Endothelial cell of umbilical vein (primary cell): ENCODE measurements at regions of chr20 and their contacts with region 1.

Region 1: GRCh38 chr20:32484958-32485769 is 100.0 kb downstream of the NOL4L start:
- DNase-seq: peak; percentile 91
- H3K4me3 ChIP-seq: peak overlapping the region; percentile 37 to 66 (median 60)
- H3K27ac ChIP-seq: peak overlapping the region; percentile 96
- H3K4me1 ChIP-seq: peaks cover 33% of the 10 kb centered on the region
- H3K27me3 ChIP-seq: no peaks in the 10 kb centered on the region
- CTCF ChIP-seq: peak; percentile 71 to 74
- POLR2A ChIP-seq: no peak

Region 2: DNA sequence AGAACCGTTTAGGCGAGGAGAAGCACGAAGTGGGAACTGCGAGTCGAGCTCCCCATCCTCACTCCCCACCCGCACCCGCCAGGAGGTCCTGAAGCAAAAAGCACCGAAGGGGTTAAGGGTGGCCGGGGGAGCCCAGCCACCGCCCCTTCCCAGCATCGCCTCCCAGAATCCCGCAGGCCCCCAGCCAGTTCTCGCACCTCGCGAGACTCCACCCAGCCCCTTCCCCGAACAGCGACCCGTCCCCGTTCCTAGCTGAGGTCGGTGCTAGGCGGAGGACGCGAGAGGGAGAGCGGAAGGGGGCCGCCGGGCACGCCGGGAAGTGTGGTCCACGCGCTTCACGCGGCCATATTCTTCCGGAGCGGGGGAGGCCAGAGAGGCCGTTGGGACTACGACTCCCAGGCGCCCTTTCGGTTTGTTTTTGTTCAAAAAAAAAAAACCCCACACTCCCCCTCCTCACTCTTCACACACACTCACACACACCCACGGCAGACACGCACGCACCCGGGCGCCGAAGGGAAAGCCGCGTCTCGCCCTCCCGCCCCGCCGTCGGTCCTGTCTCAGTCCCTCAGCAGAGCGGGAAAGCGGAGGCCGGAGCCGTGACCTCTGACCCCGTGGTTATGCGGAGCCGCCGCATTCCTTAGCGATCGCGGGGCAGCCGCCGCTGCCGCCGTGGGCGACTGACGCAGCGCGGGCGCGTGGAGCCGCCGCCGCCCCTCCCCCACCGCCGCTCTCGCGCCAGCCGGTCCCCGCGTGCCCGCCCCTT is 127.1 kb before region 1 on chr20 and contains the start of gene ASXL1:
- CTCF ChIA-PET with region 1: interaction called, 3 read pairs
- POLR2A ChIA-PET with region 1: no interaction called
- dilution Hi-C with region 1: no loop called
- intact Hi-C with region 1: loop called (anchors 1 kb)
- DNase-seq: peak; percentile 97
- H3K4me3 ChIP-seq: peak within 1 kb of the TSS; percentile 78 to 92 (median 92)
- H3K27ac ChIP-seq: peak within 1 kb of the TSS; percentile 94
- H3K4me1 ChIP-seq: peaks cover 30% of the 10 kb centered on the region
- H3K27me3 ChIP-seq: no peaks in the 10 kb centered on the region
- CTCF ChIP-seq: no peak
- POLR2A ChIP-seq: peak; percentile 61
- total RNA-seq, gene ASXL1: 98.9 and 101 TPM in 2 replicates

Region 3: GRCh38 chr20:32456869-32457478 is 28.2 kb before region 1 on chr20:
- CTCF ChIA-PET with region 1: interaction called, 22 read pairs
- POLR2A ChIA-PET with region 1: no interaction called
- dilution Hi-C with region 1: no loop called
- intact Hi-C with region 1: no loop called
- DNase-seq: no peak
- H3K4me3 ChIP-seq: no peak overlapping the region
- H3K27ac ChIP-seq: no peak overlapping the region
- H3K4me1 ChIP-seq: peaks cover 20% of the 10 kb centered on the region
- H3K27me3 ChIP-seq: no peaks in the 10 kb centered on the region
- CTCF ChIP-seq: peak; percentile 67 to 75
- POLR2A ChIP-seq: no peak

Region 4: DNA sequence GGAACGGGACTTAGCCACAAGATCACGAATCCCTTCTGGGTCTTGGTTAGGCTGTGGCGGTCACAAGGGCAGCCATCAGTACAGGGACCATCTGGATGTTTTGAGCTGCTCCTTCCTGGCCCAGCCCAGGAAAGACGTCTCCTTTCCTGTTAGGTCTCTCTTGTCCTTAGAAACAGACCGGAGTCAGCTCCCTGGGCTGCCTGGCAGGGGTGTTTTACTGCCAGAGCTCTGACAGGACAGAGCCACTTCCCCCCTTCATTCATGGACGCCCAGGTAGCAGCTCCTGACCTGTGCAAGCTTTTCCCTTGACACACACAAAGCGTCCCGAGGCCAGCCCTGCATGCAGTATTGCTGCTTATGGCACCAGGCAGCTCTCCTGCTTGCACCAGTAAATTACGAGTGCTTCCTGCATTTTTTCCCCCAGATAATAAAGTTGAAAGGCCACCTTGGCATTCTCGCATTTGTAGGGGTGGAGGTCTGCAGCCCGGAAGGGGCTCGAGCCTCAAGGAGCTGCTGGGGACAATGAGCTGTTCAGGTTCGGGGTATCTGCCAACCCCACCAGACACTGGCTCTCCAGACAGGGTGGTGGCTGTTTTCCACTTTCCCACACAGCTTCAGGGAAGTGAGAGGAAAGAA is 12.5 kb after region 1 on chr20:
- CTCF ChIA-PET with region 1: interaction called, 30 read pairs
- POLR2A ChIA-PET with region 1: interaction called, 7 read pairs
- dilution Hi-C with region 1: no loop called
- intact Hi-C with region 1: loop called (anchors 1 kb)
- DNase-seq: peak; percentile 63
- H3K4me3 ChIP-seq: no peak overlapping the region
- H3K27ac ChIP-seq: peak overlapping the region; percentile 79
- H3K4me1 ChIP-seq: peaks cover 32% of the 10 kb centered on the region
- H3K27me3 ChIP-seq: no peaks in the 10 kb centered on the region
- CTCF ChIP-seq: no peak
- POLR2A ChIP-seq: peak; percentile 23

Region 5: GRCh38 chr20:32509639-32510066 is 24.5 kb after region 1 on chr20:
- CTCF ChIA-PET with region 1: interaction called, 25 read pairs
- POLR2A ChIA-PET with region 1: no interaction called
- dilution Hi-C with region 1: no loop called
- intact Hi-C with region 1: no loop called
- DNase-seq: peak; percentile 71
- H3K4me3 ChIP-seq: no peak overlapping the region
- H3K27ac ChIP-seq: peak overlapping the region; percentile 9
- H3K4me1 ChIP-seq: peaks cover 24% of the 10 kb centered on the region
- H3K27me3 ChIP-seq: no peaks in the 10 kb centered on the region
- CTCF ChIP-seq: peak; percentile 53 to 63
- POLR2A ChIP-seq: no peak

Region 6: GRCh38 chr20:32516583-32517517 is 31.7 kb after region 1 on chr20:
- CTCF ChIA-PET with region 1: interaction called, 14 read pairs
- POLR2A ChIA-PET with region 1: no interaction called
- dilution Hi-C with region 1: no loop called
- intact Hi-C with region 1: loop called (anchors 1 kb)
- DNase-seq: peak; percentile 63
- H3K4me3 ChIP-seq: no peak overlapping the region
- H3K27ac ChIP-seq: peak overlapping the region; percentile 1
- H3K4me1 ChIP-seq: peaks cover 24% of the 10 kb centered on the region
- H3K27me3 ChIP-seq: no peaks in the 10 kb centered on the region
- CTCF ChIP-seq: no peak
- POLR2A ChIP-seq: no peak

Region 7: DNA sequence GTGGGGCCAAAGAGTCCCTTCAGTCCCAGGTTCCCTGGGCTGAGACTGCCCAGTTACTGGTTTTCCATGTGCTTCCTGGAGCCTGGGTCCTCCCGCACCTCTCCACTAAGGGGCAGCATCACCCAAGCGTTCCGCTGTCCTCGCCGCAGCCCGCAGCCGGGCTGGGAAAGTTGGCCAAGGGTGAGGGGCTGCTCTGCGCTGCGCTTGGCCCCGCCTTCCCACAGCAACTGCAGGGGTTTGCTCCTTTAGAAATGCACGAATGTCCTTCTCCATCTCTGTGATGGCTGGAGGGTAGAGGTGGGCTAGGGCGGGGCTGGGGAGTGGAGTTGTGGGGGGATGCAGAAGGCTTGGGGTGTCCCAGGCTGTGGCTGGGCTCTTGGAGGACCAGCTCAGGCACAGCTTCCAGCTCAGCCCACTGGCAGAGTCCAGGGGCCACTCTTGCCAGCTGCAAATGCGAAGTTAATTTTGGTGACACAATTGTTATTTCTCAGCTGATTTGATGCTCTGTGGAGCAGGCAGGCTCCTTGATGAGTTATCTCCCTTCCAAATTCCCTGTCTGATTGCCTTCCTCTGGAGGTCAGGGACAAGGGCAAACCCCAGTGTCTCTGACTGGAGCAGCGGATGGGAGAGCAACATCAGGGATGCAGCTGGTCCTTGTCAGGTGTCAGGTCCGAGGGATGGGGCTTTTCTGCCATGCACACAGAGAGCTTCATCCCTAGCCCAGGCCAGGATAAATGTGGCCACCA is 36.8 kb after region 1 on chr20:
- CTCF ChIA-PET with region 1: interaction called, 14 read pairs
- POLR2A ChIA-PET with region 1: interaction called, 3 read pairs
- dilution Hi-C with region 1: no loop called
- intact Hi-C with region 1: loop called (anchors 1 kb)
- DNase-seq: peak; percentile 53
- H3K4me3 ChIP-seq: no peak overlapping the region
- H3K27ac ChIP-seq: no peak overlapping the region
- H3K4me1 ChIP-seq: peaks cover 16% of the 10 kb centered on the region
- H3K27me3 ChIP-seq: no peaks in the 10 kb centered on the region
- CTCF ChIP-seq: peak; percentile 86 to 90
- POLR2A ChIP-seq: no peak